CD8-positive, alpha-beta T cell (primary cell): ENCODE measurements at regions of chr3 and their contacts with region 1.

Region 1: GRCh38 chr3:63896332-63897030 is 15.7 kb downstream of the SCAANT1 start:
- DNase-seq: no peak
- ATAC-seq: no peak
- H3K4me3 ChIP-seq: no peak overlapping the region
- H3K4me3 Mint-ChIP-seq: no peak overlapping the region
- H3K27ac ChIP-seq: no peak overlapping the region
- H3K27ac Mint-ChIP-seq: no peak overlapping the region
- H3K4me1 ChIP-seq: peaks cover 3% of the 10 kb centered on the region
- H3K4me1 Mint-ChIP-seq: peaks cover 49% of the 10 kb centered on the region
- H3K27me3 ChIP-seq: no peaks in the 10 kb centered on the region
- H3K27me3 Mint-ChIP-seq: no peaks in the 10 kb centered on the region
- CTCF ChIP-seq: no peak

Region 2: DNA sequence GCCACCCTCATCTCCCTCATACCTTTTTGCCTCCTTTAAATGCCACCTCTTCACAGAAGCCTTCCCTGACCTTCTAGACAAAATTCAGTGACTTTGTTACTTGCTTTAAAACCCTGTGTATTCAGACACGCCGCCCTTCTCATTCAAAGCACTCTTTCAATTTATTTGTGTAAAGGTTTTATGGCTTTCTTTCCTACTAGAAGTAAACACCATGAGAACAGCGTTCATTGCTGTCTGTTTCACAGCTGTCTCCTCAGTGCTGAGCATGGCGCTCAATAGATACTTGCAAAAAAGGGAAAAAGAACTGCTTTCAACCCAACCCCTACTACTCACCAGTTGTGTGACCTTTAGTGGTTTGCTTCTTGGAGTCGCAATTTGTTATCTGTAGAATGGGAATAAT is 15.8 kb before region 1 on chr3:
- CTCF ChIA-PET with region 1: no interaction called
- POLR2A ChIA-PET with region 1: interaction called, 3 read pairs
- intact Hi-C with region 1: loop called in 1 of 2 experiments (anchors 1 kb)
- DNase-seq: no peak
- ATAC-seq: no peak
- H3K4me3 ChIP-seq: no peak overlapping the region
- H3K4me3 Mint-ChIP-seq: no peak overlapping the region
- H3K27ac ChIP-seq: no peak overlapping the region
- H3K27ac Mint-ChIP-seq: no peak overlapping the region
- H3K4me1 ChIP-seq: peaks cover 14% of the 10 kb centered on the region
- H3K4me1 Mint-ChIP-seq: peaks cover 62% of the 10 kb centered on the region
- H3K27me3 ChIP-seq: no peaks in the 10 kb centered on the region
- H3K27me3 Mint-ChIP-seq: no peaks in the 10 kb centered on the region
- CTCF ChIP-seq: no peak